ENCODE measurements at regions of chr5 and their contacts with region 1.

Region 1: GRCh38 chr5:177390363-177391300 is 6.4 kb downstream of the SLC34A1 start:
- DNase-seq: peak; percentile 79
- H3K4me3 ChIP-seq: no peak overlapping the region
- H3K27ac ChIP-seq: peak overlapping the region; percentile 82; the same call in 1 of the 2 replicates
- H3K4me1 ChIP-seq: peaks cover 15% of the 10 kb centered on the region
- H3K27me3 ChIP-seq: no peaks in the 10 kb centered on the region

Region 2: GRCh38 chr5:177454397-177455035 is 63.9 kb after region 1 on chr5:
- in situ Hi-C with region 1: loop called (anchors 10 kb)
- DNase-seq: peak; percentile 92
- H3K4me3 ChIP-seq: peak overlapping the region; percentile 66
- H3K27ac ChIP-seq: peak overlapping the region; percentile 67
- H3K4me1 ChIP-seq: 0 out of 2 replicates have a peak, but pooled peaks cover 10% of the 10 kb centered on the region
- H3K27me3 ChIP-seq: no peaks in the 10 kb centered on the region